ENCODE measurements at regions of chr14 and their contacts with region 1.

Region 1: GRCh38 chr14:23120541-23121251 is 1.6 kb upstream of the CEBPE start:
- DNase-seq: peak; percentile 70 to 89
- H3K4me3 ChIP-seq: no peak overlapping the region
- H3K27ac ChIP-seq: no peak overlapping the region
- H3K4me1 ChIP-seq: peaks cover 0 to 11% (median 3%) of the 10 kb centered on the region in 4 experiments; a peak in 5 of 7 replicates
- H3K27me3 ChIP-seq: no peaks in the 10 kb centered on the region
- CTCF ChIP-seq: peak; percentile 99 to 100 (median 100)
- EP300 ChIP-seq: peak in 1 of 2 experiments; percentile 22; a peak in 1 of 3 replicates
- POLR2A ChIP-seq: no peak
- RAD21 ChIP-seq: peak; percentile 100

Region 2: DNA sequence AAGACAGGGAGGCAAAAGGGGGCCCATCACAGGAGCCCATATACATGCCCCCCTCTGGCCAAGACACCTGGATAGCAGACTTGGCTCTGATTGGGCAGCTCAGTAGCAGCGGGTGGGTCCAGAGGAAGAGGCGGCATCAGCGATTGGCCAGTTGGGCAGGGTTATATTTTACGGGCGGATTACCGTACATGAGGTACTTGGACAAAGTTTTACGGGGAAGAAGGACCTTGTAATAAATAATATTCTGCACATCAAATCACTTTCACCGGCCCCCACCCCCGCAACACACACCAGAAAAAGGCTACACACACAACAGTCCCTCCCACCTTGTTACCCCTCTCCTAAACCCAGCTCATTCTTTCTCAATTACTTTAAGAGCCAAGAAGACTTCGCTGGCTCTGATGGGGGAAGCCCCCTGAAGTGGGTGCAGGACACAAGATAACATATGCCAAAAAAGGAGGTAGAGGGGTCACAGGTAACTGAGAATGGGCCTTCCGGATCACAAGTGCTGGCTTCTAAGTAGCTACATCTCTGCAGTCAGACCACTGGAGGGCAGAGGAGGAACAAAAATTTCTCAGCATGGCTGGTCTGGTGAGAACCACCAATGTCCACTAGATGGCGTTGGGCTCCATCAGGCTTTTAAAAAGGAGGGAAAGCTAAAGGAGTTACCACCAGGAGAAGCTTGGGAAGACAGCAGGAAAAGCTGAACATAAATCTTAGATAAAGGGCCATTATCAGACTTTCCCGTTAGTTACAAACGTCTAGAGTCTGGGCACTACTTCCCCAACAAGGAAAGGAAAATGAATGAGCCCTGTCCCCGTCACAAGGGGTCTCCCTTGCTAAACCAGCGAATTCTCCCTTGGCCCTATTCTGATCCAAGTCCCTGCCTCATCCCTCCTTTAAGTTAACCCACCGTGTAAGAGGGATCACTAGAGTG is 52.0 kb before region 1 on chr14:
- CTCF ChIA-PET with region 1: interaction called, 14 read pairs
- POLR2A ChIA-PET with region 1: interaction called, 6 read pairs
- DNase-seq: peak; percentile 84 to 85
- H3K4me3 ChIP-seq: peak overlapping the region in 1 of 4 experiments; percentile 18; a peak in 1 of 8 replicates
- H3K27ac ChIP-seq: no peak overlapping the region
- H3K4me1 ChIP-seq: peaks cover 5 to 27% (median 15%) of the 10 kb centered on the region in 4 experiments; a peak in 6 of 7 replicates
- H3K27me3 ChIP-seq: no peaks in the 10 kb centered on the region
- CTCF ChIP-seq: peak; percentile 82 to 99 (median 99)
- EP300 ChIP-seq: no peak
- POLR2A ChIP-seq: no peak
- RAD21 ChIP-seq: peak; percentile 59 to 71

Region 3: DNA sequence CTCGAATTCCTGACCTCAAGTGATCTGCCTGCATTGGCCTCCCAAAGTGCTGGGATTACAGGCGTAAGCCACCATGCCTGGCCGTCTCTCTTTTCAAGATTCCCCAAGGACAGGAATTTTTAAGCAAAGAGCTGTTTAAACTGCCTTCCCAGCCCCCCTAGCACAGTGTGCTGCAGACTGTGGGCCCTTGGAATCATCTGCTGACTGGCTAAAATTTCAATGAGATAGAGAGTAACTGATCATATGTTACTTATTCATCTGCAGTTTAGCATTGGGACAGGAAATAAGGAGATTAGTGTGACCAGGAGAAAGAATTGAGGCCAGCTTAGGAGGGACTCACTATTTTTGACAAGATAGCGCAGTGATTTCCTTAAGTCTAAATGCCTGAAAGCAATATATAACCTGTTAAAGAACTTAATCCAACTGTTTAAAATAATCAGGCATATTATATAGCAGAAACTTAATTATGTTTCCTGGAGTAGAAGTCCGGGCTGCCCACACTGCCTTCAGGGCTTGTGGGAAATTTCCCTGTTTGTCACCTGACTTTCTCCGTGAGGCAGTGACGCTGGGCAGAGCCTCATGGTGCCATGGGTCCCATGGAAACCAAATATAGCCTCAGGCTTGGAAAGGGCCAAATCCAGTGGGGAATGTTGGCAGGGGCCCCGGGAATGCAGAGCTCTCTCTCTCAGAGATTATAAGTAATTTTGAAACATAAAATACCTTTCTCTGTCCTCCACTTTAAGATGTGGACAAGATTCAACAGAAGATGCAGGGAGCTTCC is 21.2 kb after region 1 on chr14:
- CTCF ChIA-PET with region 1: interaction called, 21 read pairs
- POLR2A ChIA-PET with region 1: interaction called, 9 read pairs
- DNase-seq: no peak
- H3K4me3 ChIP-seq: no peak overlapping the region
- H3K27ac ChIP-seq: no peak overlapping the region
- H3K4me1 ChIP-seq: no peaks in the 10 kb centered on the region
- H3K27me3 ChIP-seq: no peaks in the 10 kb centered on the region
- CTCF ChIP-seq: no peak
- EP300 ChIP-seq: no peak
- POLR2A ChIP-seq: no peak
- RAD21 ChIP-seq: no peak

Region 4: GRCh38 chr14:23174276-23175184 is 53.8 kb after region 1 on chr14:
- CTCF ChIA-PET with region 1: interaction called, 46 read pairs
- POLR2A ChIA-PET with region 1: no interaction called
- DNase-seq: no peak
- H3K4me3 ChIP-seq: no peak overlapping the region; a peak in 1 of 8 replicates
- H3K27ac ChIP-seq: no peak overlapping the region
- H3K4me1 ChIP-seq: peaks cover 2 to 18% (median 13%) of the 10 kb centered on the region in 4 experiments; a peak in 5 of 7 replicates
- H3K27me3 ChIP-seq: no peaks in the 10 kb centered on the region
- CTCF ChIP-seq: no peak
- EP300 ChIP-seq: no peak
- POLR2A ChIP-seq: no peak
- RAD21 ChIP-seq: no peak

Region 5: DNA sequence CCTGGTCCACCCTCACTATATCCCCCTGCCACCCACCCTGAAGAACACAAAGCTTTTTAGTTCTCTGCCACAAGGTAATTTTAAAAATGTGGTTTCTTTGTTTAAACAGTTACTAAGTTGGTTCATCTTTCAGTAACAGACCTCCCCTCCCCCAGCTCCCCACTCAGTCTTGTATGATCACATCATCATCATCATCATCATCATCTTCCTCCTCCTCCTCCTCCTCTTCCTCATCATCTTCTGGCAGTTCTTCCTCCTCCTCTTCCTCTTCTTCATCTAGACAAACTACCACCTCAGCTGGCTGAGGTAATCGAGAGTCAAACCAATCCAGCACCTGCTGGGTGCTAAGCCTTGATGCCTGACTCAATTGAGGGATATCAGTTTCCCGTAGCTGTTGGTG is 154.7 kb after region 1 on chr14:
- CTCF ChIA-PET with region 1: interaction called, 16 read pairs
- POLR2A ChIA-PET with region 1: no interaction called
- DNase-seq: no peak
- H3K4me3 ChIP-seq: no peak overlapping the region
- H3K27ac ChIP-seq: no peak overlapping the region
- H3K4me1 ChIP-seq: peaks cover 2 to 7% (median 5%) of the 10 kb centered on the region in 4 experiments; a peak in 4 of 7 replicates
- H3K27me3 ChIP-seq: peaks cover 0 to 16% (median 8%) of the 10 kb centered on the region in 4 experiments; a peak in 5 of 7 replicates
- CTCF ChIP-seq: no peak
- EP300 ChIP-seq: no peak
- POLR2A ChIP-seq: no peak
- RAD21 ChIP-seq: no peak

Region 6: GRCh38 chr14:23306410-23307145 is 185.9 kb after region 1 on chr14 and contains the start of gene BCL2L2:
- CTCF ChIA-PET with region 1: interaction called, 18 read pairs
- POLR2A ChIA-PET with region 1: no interaction called
- DNase-seq: peak; percentile 70 to 90
- H3K4me3 ChIP-seq: peak within 1 kb of the TSS; percentile 57 to 90 (median 83)
- H3K27ac ChIP-seq: peak within 1 kb of the TSS; percentile 83; the same call in 1 of the 2 replicates
- H3K4me1 ChIP-seq: peaks cover 0 to 3% (median 1%) of the 10 kb centered on the region in 4 experiments; a peak in 4 of 7 replicates
- H3K27me3 ChIP-seq: peaks cover 0 to 12% (median 5%) of the 10 kb centered on the region in 4 experiments; a peak in 4 of 7 replicates
- CTCF ChIP-seq: no peak
- EP300 ChIP-seq: peak in 1 of 2 experiments; percentile 79; a peak in 1 of 3 replicates
- POLR2A ChIP-seq: peak; percentile 85 to 91
- RAD21 ChIP-seq: 0 out of 4 replicates have a peak, but pooled peaks of 1 of the 2 experiments have one; percentile 9
- total RNA-seq, gene BCL2L2: 13.3 and 13.8 TPM in 2 replicates

Measured in H1 (cell line).